ENCODE measurements at regions of chr1 and their contacts with region 1.

Region 1: GRCh38 chr1:59750328-59751003 is 64.3 kb upstream of the HOOK1 start:
- DNase-seq: peak; percentile 87
- H3K4me3 Mint-ChIP-seq: peak overlapping the region; percentile 30
- H3K27ac Mint-ChIP-seq: peak overlapping the region; percentile 91
- H3K4me1 Mint-ChIP-seq: peaks cover 18% of the 10 kb centered on the region
- H3K27me3 Mint-ChIP-seq: no peaks in the 10 kb centered on the region
- CTCF ChIP-seq: no peak

Region 2: GRCh38 chr1:59096501-59096900 is 654.0 kb before region 1 on chr1:
- CTCF ChIA-PET with region 1: no interaction called
- POLR2A ChIA-PET with region 1: no interaction called
- intact Hi-C with region 1: no loop called
- DNase-seq: no peak
- H3K4me3 Mint-ChIP-seq: no peak overlapping the region
- H3K27ac Mint-ChIP-seq: no peak overlapping the region
- H3K4me1 Mint-ChIP-seq: no peaks in the 10 kb centered on the region
- H3K27me3 Mint-ChIP-seq: no peaks in the 10 kb centered on the region
- CTCF ChIP-seq: no peak

Region 3: GRCh38 chr1:59707178-59707791 is 43.2 kb before region 1 on chr1:
- CTCF ChIA-PET with region 1: no interaction called
- POLR2A ChIA-PET with region 1: interaction called, 42 read pairs
- intact Hi-C with region 1: no loop called
- DNase-seq: peak; percentile 90
- H3K4me3 Mint-ChIP-seq: no peak overlapping the region
- H3K27ac Mint-ChIP-seq: peak overlapping the region; percentile 33
- H3K4me1 Mint-ChIP-seq: peaks cover 46% of the 10 kb centered on the region
- H3K27me3 Mint-ChIP-seq: no peaks in the 10 kb centered on the region
- CTCF ChIP-seq: no peak

Region 4: GRCh38 chr1:59767119-59767518 is 16.7 kb after region 1 on chr1:
- CTCF ChIA-PET with region 1: interaction called, 4 read pairs
- POLR2A ChIA-PET with region 1: interaction called, 39 read pairs
- intact Hi-C with region 1: no loop called
- DNase-seq: no peak
- H3K4me3 Mint-ChIP-seq: no peak overlapping the region
- H3K27ac Mint-ChIP-seq: no peak overlapping the region
- H3K4me1 Mint-ChIP-seq: peaks cover 19% of the 10 kb centered on the region
- H3K27me3 Mint-ChIP-seq: no peaks in the 10 kb centered on the region
- CTCF ChIP-seq: no peak

Region 5: GRCh38 chr1:59845091-59845490 is 94.6 kb after region 1 on chr1:
- CTCF ChIA-PET with region 1: no interaction called
- POLR2A ChIA-PET with region 1: no interaction called
- intact Hi-C with region 1: no loop called
- DNase-seq: no peak
- H3K4me3 Mint-ChIP-seq: no peak overlapping the region
- H3K27ac Mint-ChIP-seq: no peak overlapping the region
- H3K4me1 Mint-ChIP-seq: no peaks in the 10 kb centered on the region
- H3K27me3 Mint-ChIP-seq: no peaks in the 10 kb centered on the region
- CTCF ChIP-seq: no peak

Region 6: DNA sequence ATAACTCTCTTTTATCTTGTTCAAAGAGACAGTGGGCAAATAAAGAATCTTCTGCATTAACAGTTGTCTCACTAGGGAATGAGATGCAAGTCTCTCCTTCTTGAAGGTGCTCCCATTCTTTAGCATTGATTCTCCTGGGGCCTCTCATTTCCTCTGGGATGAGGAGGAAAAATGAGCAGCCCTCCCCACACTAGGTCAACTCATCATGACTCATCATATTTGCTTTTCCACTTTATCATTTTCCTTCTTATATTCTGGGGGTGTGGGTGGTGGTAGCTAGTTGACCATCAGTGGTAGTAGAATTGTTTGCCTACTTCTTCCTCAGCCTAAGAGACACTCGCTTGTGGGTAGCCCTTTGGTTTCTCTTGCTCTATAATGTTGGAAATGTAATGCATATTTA is 505.1 kb after region 1 on chr1:
- CTCF ChIA-PET with region 1: no interaction called
- POLR2A ChIA-PET with region 1: no interaction called
- intact Hi-C with region 1: no loop called
- DNase-seq: peak; percentile 10
- H3K4me3 Mint-ChIP-seq: no peak overlapping the region
- H3K27ac Mint-ChIP-seq: no peak overlapping the region
- H3K4me1 Mint-ChIP-seq: no peaks in the 10 kb centered on the region
- H3K27me3 Mint-ChIP-seq: no peaks in the 10 kb centered on the region
- CTCF ChIP-seq: no peak

Region 7: GRCh38 chr1:60329651-60330050 is 579.2 kb after region 1 on chr1:
- CTCF ChIA-PET with region 1: no interaction called
- POLR2A ChIA-PET with region 1: no interaction called
- intact Hi-C with region 1: no loop called
- DNase-seq: no peak
- H3K4me3 Mint-ChIP-seq: no peak overlapping the region
- H3K27ac Mint-ChIP-seq: no peak overlapping the region
- H3K4me1 Mint-ChIP-seq: no peaks in the 10 kb centered on the region
- H3K27me3 Mint-ChIP-seq: peaks cover 72% of the 10 kb centered on the region
- CTCF ChIP-seq: no peak

Measured in MCF 10A (cell line).